Heart right ventricle (tissue), 16 donors: ENCODE measurements at regions of chr2 and their contacts with region 1.

Region 1: DNA sequence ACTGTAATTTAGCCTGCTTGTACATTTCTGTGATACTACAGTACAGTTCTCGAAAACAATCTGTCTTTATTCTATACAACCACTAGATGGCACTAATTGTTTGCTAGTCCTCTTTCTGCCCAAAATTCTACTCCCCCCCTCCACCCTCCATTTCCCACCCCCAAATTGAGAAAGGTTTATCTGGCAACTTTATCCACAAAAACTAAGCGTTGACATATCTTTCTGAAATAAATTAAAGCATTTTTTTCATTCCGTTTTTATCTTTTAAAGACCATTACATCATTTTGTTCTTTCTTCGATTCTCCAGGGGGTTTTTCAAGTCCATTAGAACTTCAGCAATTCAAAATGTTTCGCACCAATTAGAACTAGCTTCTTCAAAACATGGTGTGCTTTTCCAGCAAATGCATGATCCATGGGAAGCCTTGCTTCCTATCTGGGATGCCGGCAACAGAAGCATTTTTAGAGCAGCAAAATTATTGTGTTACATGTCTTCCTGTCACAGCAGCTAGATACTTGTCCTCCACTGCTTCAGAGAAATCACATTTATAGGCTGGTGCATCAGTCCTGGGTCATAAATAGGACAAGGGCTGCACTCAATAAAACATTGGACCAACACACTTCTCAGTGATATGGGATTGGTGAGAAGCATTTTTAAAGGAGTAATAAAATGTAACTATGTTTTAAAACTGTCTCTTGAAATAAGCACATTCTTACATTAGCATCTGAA is 241.3 kb downstream of the PAX3 start:
- DNase-seq: no peak
- ATAC-seq: peak in 5 of 8 donors; percentile 57 to 67 (median 60)
- H3K4me3 ChIP-seq: no peak overlapping the region
- H3K27ac ChIP-seq: no peak overlapping the region
- H3K4me1 ChIP-seq: peaks cover 0 to 6% (median 0%) of the 10 kb centered on the region in 9 donors
- H3K27me3 ChIP-seq: peaks cover 0 to 75% (median 55%) of the 10 kb centered on the region in 7 donors
- CTCF ChIP-seq: peak; percentile 22 to 75 (median 67)

Region 2: DNA sequence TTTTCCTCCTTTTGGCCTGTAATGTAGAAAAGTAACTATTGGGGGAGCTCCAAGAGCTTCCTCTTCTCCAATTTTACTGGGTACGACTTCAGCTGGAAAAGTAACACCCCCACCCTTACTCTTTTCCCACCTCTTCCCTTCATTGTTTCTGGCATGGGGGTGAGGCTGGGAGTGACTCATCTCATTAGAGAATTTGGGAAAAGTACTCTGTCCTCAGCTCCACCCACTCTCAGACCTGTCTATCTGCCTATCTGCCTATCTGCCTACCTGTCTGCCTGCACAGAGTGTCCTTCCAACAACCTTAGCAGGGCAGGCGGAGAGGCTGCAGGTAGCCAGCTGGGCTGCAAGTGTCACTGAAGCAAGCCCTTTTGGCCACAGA is 579.0 kb before region 1 on chr2:
- intact Hi-C with region 1: no loop called
- DNase-seq: no peak
- ATAC-seq: peak in 6 of 8 donors; percentile 29 to 79 (median 56)
- H3K4me3 ChIP-seq: no peak overlapping the region
- H3K27ac ChIP-seq: peak overlapping the region in 4 of 10 donors; percentile 8 to 29 (median 20)
- H3K4me1 ChIP-seq: peaks cover 0 to 20% (median 13%) of the 10 kb centered on the region in 9 donors
- H3K27me3 ChIP-seq: no peaks in the 10 kb centered on the region
- CTCF ChIP-seq: peak in 2 of 9 donors; percentile 18 to 38

Region 3: GRCh38 chr2:221958224-221958623 is 99.3 kb before region 1 on chr2:
- intact Hi-C with region 1: no loop called
- DNase-seq: no peak
- ATAC-seq: no peak
- H3K4me3 ChIP-seq: no peak overlapping the region
- H3K27ac ChIP-seq: no peak overlapping the region
- H3K4me1 ChIP-seq: no peaks in the 10 kb centered on the region
- H3K27me3 ChIP-seq: peaks cover 0 to under 1% (median 0%) of the 10 kb centered on the region in 7 donors
- CTCF ChIP-seq: no peak

Region 4: DNA sequence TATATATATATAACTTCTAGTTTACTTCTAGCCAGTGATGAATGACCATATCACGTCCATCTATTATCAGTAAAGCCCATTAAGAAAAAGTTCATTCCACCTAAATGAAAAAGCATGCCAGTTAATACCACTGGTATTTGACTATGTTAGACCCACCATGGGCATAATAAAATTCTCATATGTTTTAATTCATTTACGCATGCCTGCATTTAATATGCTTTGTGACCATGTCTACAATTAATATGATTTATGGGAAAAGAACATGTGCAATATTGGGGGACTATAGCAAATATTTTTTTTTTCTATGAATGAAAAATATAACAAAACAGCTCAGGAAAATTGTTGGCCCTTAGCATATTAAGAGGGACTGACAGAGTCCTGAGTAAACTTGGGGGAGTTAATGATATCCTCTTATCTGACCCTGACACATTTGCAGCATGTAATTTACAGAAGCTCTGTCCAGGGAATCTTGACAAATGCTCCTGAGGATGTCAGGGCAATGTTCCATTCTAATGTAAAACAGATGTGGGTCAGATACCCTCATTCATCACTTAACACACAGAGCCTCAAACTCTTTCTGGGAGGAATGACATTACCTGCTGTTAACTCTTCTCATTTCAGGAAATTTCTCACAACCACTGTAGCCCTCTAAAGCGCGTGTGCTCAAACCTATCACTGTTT is 150.6 kb after region 1 on chr2:
- intact Hi-C with region 1: no loop called
- DNase-seq: no peak
- ATAC-seq: no peak
- H3K4me3 ChIP-seq: no peak overlapping the region
- H3K27ac ChIP-seq: no peak overlapping the region
- H3K4me1 ChIP-seq: no peaks in the 10 kb centered on the region
- H3K27me3 ChIP-seq: peaks cover 0 to 66% (median 14%) of the 10 kb centered on the region in 7 donors
- CTCF ChIP-seq: no peak

Region 5: DNA sequence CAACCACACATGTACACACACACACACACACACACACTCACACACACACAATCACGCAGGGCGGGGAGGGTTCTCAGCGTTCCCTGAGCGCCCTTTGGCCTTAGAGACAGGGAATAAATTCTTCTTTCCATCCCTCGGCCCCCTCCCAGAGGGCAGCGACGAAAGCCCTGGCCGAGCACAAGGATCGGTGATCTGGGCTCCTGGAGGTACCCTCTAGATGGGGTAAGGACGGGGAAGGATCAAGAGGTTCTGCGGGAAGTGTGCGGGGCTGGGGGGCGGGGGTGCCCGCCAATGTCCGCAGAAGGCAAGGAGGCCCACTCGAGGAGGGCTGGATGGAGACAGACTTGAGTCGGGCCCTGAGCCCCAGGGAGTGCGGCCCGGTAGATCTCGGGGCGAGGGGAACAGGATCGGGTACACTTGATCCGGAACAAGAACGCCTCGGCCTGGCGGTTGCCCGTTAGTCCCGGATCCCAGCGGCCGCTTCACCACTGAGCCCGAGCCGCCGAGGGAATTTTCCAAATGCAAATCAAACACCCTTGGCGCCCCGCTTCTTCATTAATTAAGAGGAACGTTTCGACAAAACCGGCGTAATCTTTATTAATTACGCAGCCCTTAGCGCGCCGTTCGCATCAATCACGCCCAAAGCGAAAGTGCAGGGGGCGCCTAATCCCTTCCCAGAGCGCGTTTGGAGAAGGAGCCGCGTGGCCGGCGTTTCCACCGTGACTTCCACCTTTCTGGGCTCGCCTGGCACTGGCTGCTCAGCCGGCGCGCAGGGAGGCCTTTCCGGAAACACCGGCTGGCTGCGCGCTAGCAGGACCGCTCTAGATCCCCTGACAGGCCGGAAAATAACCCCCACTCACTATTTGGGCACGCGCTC is 248.2 kb after region 1 on chr2:
- intact Hi-C with region 1: loop called in 3 of 10 experiments (anchors 10 kb)
- DNase-seq: no peak
- ATAC-seq: peak in 7 of 8 donors; percentile 28 to 61 (median 49)
- H3K4me3 ChIP-seq: peak overlapping the region; percentile 24 to 65 (median 52)
- H3K27ac ChIP-seq: no peak overlapping the region
- H3K4me1 ChIP-seq: peaks cover 9 to 52% (median 26%) of the 10 kb centered on the region in 9 donors
- H3K27me3 ChIP-seq: peaks cover 39 to 100% (median 100%) of the 10 kb centered on the region in 7 donors
- CTCF ChIP-seq: no peak

Region 6: DNA sequence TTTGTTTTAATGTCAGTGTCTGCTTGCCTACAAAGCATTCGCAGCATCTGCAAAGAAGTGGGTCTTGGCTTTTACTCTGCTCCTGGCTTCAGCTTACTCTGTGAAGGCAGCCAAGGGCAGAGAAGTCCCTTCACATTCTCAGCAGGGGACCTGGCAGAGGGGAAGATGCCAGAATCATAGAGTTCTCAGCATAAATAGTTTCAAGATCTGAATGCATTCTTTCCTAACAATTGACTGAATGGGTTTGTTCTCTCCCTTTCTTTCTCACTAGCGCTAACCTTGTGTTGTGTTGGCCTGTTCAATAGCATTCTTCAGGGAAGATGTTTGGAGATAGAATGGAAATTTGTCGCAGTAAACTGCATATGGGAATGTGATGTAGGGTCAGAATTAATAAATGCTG is 491.5 kb after region 1 on chr2:
- intact Hi-C with region 1: no loop called
- DNase-seq: no peak
- ATAC-seq: no peak
- H3K4me3 ChIP-seq: no peak overlapping the region
- H3K27ac ChIP-seq: no peak overlapping the region
- H3K4me1 ChIP-seq: peaks cover 0 to 5% (median 0%) of the 10 kb centered on the region in 9 donors
- H3K27me3 ChIP-seq: peaks cover 0 to 27% (median 7%) of the 10 kb centered on the region in 7 donors
- CTCF ChIP-seq: no peak

Region 7: DNA sequence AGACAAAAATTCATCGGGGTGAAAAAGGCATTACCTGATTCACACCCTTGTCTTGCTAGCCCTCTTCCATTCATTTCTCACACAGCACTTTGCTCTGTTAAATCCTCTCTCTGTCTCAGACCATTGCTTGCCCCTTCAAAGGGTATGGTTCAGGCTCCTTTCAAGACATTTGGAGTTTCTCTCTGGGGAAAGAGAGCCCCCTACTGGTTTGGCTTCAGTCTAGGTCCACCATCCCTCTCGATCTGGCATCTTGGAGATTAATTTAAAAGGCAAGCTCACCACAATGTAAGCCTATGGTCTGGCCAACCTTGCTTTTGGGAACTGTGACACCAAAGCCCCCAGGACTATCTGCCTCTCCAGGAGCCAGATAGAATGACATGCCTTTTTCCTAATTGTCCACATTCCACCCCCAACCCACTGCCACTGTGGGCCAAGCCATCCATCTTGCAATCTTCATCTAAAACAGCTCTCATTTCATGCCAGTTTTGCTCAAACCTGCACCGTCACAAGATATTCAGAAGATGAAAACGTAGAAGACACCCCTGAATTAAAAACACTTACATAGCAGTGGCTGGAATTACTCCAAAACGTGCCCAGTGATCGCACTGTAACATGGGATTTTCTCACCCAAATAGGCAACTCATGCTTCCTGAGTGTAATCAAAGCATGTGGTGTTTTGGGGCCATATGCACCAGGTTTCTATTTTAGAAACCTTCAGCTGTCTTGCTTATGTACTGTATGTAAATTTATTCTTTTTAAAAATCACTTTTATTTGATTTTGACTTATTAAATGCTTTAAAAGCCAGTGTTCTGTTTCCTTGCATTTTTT is 504.5 kb after region 1 on chr2:
- intact Hi-C with region 1: loop called in 3 of 10 experiments (anchors 10 kb)
- DNase-seq: peak in 1 of 2 donors; percentile 52
- ATAC-seq: peak; percentile 60 to 77 (median 72)
- H3K4me3 ChIP-seq: no peak overlapping the region
- H3K27ac ChIP-seq: no peak overlapping the region
- H3K4me1 ChIP-seq: peaks cover 0 to 6% (median 0%) of the 10 kb centered on the region in 9 donors
- H3K27me3 ChIP-seq: peaks cover 0 to 2% (median 0%) of the 10 kb centered on the region in 7 donors
- CTCF ChIP-seq: peak; percentile 26 to 68 (median 61)

Region 8: DNA sequence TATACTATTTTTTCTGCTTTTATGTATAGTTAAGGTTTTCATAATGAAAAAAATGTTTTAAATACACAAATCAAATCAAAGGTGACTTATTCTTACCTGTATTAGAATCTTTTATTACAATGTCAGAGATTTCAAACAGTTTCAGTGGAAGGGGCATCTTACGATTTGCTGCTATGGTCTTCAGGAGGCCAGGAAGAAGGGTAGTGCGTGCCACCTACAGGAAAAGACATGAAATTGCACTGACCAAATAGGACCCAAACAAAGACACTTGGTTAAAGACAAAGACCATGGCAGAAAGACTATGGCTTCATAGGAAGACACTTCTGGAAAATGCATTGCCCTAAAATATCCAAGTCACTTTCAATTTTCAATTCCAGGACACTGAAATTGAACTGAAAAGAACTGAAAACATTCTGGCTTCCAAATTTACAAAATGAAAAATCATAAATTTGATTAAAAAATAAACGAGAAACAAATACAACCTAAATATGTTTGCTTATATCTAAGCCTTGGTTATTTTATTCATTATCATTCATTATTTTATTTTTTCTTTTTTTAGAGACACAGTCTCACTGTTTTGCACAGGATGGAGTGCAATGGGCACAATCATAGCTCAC is 556.3 kb after region 1 on chr2:
- intact Hi-C with region 1: loop called in 7 of 10 experiments (anchors 5 to 10 kb)
- DNase-seq: no peak
- ATAC-seq: peak in 3 of 8 donors; percentile 51 to 63 (median 57)
- H3K4me3 ChIP-seq: no peak overlapping the region
- H3K27ac ChIP-seq: no peak overlapping the region
- H3K4me1 ChIP-seq: peaks cover 0 to 6% (median 0%) of the 10 kb centered on the region in 9 donors
- H3K27me3 ChIP-seq: no peaks in the 10 kb centered on the region
- CTCF ChIP-seq: peak; percentile 53 to 81 (median 73)